Caco-2 (cell line): ENCODE measurements at regions of chr16 and their contacts with region 1.

Region 1: GRCh38 chr16:70653809-70654771 is 7.7 kb downstream of the IL34 start:
- DNase-seq: peak; percentile 81 to 91
- H3K4me3 ChIP-seq: no peak overlapping the region
- H3K4me3 Mint-ChIP-seq: peak overlapping the region; percentile 49
- H3K27ac Mint-ChIP-seq: no peak overlapping the region
- H3K4me1 ChIP-seq: no peaks in the 10 kb centered on the region
- H3K4me1 Mint-ChIP-seq: peaks cover 12% of the 10 kb centered on the region
- H3K27me3 ChIP-seq: no peaks in the 10 kb centered on the region
- H3K27me3 Mint-ChIP-seq: no peaks in the 10 kb centered on the region
- CTCF ChIP-seq: peak; percentile 88 to 90

Region 2: DNA sequence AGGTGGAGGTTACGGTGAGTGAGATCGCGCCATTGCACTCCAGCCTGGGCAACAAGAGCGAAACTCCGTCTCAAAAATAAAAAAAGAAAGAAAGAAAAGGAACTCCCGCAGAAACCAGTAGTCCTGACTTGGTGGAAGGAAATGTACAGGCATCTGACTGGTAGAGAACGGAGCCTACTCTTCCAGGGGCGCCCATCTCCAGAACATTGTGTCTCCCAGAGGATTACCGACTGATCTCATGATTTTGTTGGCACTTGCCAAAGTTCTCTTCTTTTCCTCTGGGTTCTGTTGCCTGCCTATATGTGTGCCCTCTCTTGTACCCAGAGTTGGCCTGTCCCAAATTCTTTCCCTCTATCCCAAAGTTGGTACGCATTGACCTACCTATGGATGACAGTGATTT is 283.2 kb before region 1 on chr16:
- CTCF ChIA-PET with region 1: interaction called, 3 read pairs
- POLR2A ChIA-PET with region 1: no interaction called
- intact Hi-C with region 1: loop called (anchors 1 kb)
- DNase-seq: no peak
- H3K4me3 ChIP-seq: no peak overlapping the region
- H3K4me3 Mint-ChIP-seq: no peak overlapping the region
- H3K27ac Mint-ChIP-seq: no peak overlapping the region
- H3K4me1 ChIP-seq: no peaks in the 10 kb centered on the region
- H3K4me1 Mint-ChIP-seq: no peaks in the 10 kb centered on the region
- H3K27me3 ChIP-seq: no peaks in the 10 kb centered on the region
- H3K27me3 Mint-ChIP-seq: no peaks in the 10 kb centered on the region
- CTCF ChIP-seq: no peak

Region 3: GRCh38 chr16:70508752-70509151 is 145.3 kb before region 1 on chr16:
- CTCF ChIA-PET with region 1: interaction called, 12 read pairs
- POLR2A ChIA-PET with region 1: no interaction called
- intact Hi-C with region 1: loop called (anchors 2 kb)
- DNase-seq: no peak
- H3K4me3 ChIP-seq: no peak overlapping the region
- H3K4me3 Mint-ChIP-seq: no peak overlapping the region
- H3K27ac Mint-ChIP-seq: no peak overlapping the region
- H3K4me1 ChIP-seq: 0 out of 2 replicates have a peak, but pooled peaks cover 3% of the 10 kb centered on the region
- H3K4me1 Mint-ChIP-seq: peaks cover 3% of the 10 kb centered on the region
- H3K27me3 ChIP-seq: no peaks in the 10 kb centered on the region
- H3K27me3 Mint-ChIP-seq: no peaks in the 10 kb centered on the region
- CTCF ChIP-seq: no peak

Region 4: GRCh38 chr16:70576431-70577255 is 77.4 kb before region 1 on chr16:
- CTCF ChIA-PET with region 1: interaction called, 4 read pairs
- POLR2A ChIA-PET with region 1: no interaction called
- intact Hi-C with region 1: loop called (anchors 1 kb)
- DNase-seq: peak in 1 of 2 experiments; percentile 51
- H3K4me3 ChIP-seq: no peak overlapping the region
- H3K4me3 Mint-ChIP-seq: no peak overlapping the region
- H3K27ac Mint-ChIP-seq: peak overlapping the region; percentile 31
- H3K4me1 ChIP-seq: peaks cover 5% of the 10 kb centered on the region; the same call in 1 of the 2 replicates
- H3K4me1 Mint-ChIP-seq: no peaks in the 10 kb centered on the region
- H3K27me3 ChIP-seq: no peaks in the 10 kb centered on the region
- H3K27me3 Mint-ChIP-seq: no peaks in the 10 kb centered on the region
- CTCF ChIP-seq: no peak

Region 5: GRCh38 chr16:70770626-70771552 is 116.8 kb after region 1 on chr16:
- CTCF ChIA-PET with region 1: interaction called, 6 read pairs
- POLR2A ChIA-PET with region 1: no interaction called
- intact Hi-C with region 1: loop called (anchors 2 kb)
- DNase-seq: peak; percentile 68 to 82
- H3K4me3 ChIP-seq: no peak overlapping the region
- H3K4me3 Mint-ChIP-seq: no peak overlapping the region
- H3K27ac Mint-ChIP-seq: no peak overlapping the region
- H3K4me1 ChIP-seq: no peaks in the 10 kb centered on the region
- H3K4me1 Mint-ChIP-seq: peaks cover 6% of the 10 kb centered on the region
- H3K27me3 ChIP-seq: no peaks in the 10 kb centered on the region
- H3K27me3 Mint-ChIP-seq: no peaks in the 10 kb centered on the region
- CTCF ChIP-seq: peak; percentile 97